B cell (primary cell): ENCODE measurements at regions of chr1 and their contacts with region 1.

Region 1: GRCh38 chr1:226424228-226425003 is 16.5 kb upstream of the PARP1 start:
- DNase-seq: peak; percentile 57
- ATAC-seq: peak; percentile 64
- H3K4me3 ChIP-seq: no peak overlapping the region
- H3K4me3 Mint-ChIP-seq: no peak overlapping the region
- H3K27ac ChIP-seq: no peak overlapping the region
- H3K27ac Mint-ChIP-seq: no peak overlapping the region
- H3K4me1 ChIP-seq: peaks cover 7 to 15% of the 10 kb centered on the region in 2 donors
- H3K4me1 Mint-ChIP-seq: peaks cover 20% of the 10 kb centered on the region
- H3K27me3 ChIP-seq: no peaks in the 10 kb centered on the region
- H3K27me3 Mint-ChIP-seq: no peaks in the 10 kb centered on the region
- CTCF ChIP-seq: peak; percentile 60

Region 2: DNA sequence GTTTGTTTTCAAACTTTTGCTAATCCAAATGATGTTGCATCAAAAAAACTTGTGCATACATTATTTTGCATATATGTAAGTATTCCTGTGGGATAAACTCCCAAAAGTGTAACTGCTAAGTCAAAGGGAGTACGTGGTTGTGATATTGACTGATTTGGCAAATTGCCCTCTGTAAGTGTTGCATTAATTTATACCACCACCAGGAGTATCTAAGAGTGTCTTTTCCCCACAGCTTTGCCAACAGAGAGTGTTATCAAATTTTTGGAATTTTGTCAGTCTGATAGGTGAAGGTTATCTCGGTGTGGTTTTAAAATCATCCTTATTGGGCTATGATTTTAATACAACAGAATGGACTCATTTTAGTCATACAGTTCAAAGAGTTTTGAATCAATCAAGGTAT is 13.6 kb after region 1 on chr1:
- CTCF ChIA-PET with region 1: interaction called, 31 read pairs
- POLR2A ChIA-PET with region 1: no interaction called
- intact Hi-C with region 1: no loop called
- DNase-seq: no peak
- ATAC-seq: no peak
- H3K4me3 ChIP-seq: no peak overlapping the region
- H3K4me3 Mint-ChIP-seq: no peak overlapping the region
- H3K27ac ChIP-seq: no peak overlapping the region
- H3K27ac Mint-ChIP-seq: no peak overlapping the region
- H3K4me1 ChIP-seq: peaks cover 22 to 28% of the 10 kb centered on the region in 2 donors
- H3K4me1 Mint-ChIP-seq: peaks cover 29% of the 10 kb centered on the region
- H3K27me3 ChIP-seq: no peaks in the 10 kb centered on the region
- H3K27me3 Mint-ChIP-seq: no peaks in the 10 kb centered on the region
- CTCF ChIP-seq: peak; percentile 47

Region 3: GRCh38 chr1:226444901-226445300 is 20.5 kb after region 1 on chr1:
- CTCF ChIA-PET with region 1: interaction called, 13 read pairs
- POLR2A ChIA-PET with region 1: no interaction called
- intact Hi-C with region 1: no loop called
- DNase-seq: peak; percentile 74
- ATAC-seq: peak; percentile 97
- H3K4me3 ChIP-seq: no peak overlapping the region
- H3K4me3 Mint-ChIP-seq: peak overlapping the region; percentile 46
- H3K27ac ChIP-seq: peak overlapping the region; percentile 8 to 20
- H3K27ac Mint-ChIP-seq: peak overlapping the region; percentile 78
- H3K4me1 ChIP-seq: peaks cover 23% of the 10 kb centered on the region in 2 donors
- H3K4me1 Mint-ChIP-seq: peaks cover 23% of the 10 kb centered on the region
- H3K27me3 ChIP-seq: no peaks in the 10 kb centered on the region
- H3K27me3 Mint-ChIP-seq: no peaks in the 10 kb centered on the region
- CTCF ChIP-seq: peak; percentile 38

Region 4: DNA sequence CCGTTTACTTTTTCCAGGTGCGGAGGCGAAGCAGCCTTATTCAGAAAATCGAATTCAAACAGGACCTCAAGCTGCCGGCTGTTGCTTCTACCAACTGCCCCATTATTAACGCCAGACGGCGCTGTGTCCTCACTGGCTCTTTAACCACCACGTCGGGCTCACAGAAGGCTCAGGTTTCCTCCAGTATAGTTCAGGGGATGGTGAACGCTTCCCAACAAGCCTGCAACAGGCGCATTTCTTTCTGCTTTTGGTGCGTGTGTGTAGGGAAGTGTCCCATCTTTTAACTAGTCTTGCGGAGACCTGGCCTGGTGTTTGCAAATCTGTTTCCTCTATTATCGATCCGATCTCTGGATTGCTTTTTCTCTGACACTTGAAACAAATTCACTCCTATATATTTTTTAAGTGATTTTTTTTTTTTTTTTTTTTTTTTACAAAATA is 123.4 kb after region 1 on chr1:
- CTCF ChIA-PET with region 1: interaction called, 21 read pairs
- POLR2A ChIA-PET with region 1: no interaction called
- intact Hi-C with region 1: loop called (anchors 1 kb)
- DNase-seq: peak; percentile 83
- ATAC-seq: peak; percentile 80
- H3K4me3 ChIP-seq: peak overlapping the region in 3 of 5 experiments; percentile 34 to 51 (median 35)
- H3K4me3 Mint-ChIP-seq: peak overlapping the region; percentile 59
- H3K27ac ChIP-seq: no peak overlapping the region
- H3K27ac Mint-ChIP-seq: no peak overlapping the region
- H3K4me1 ChIP-seq: peaks cover 22 to 24% of the 10 kb centered on the region in 2 donors
- H3K4me1 Mint-ChIP-seq: peaks cover 21% of the 10 kb centered on the region
- H3K27me3 ChIP-seq: peaks cover 0 to 33% (median 4%) of the 10 kb centered on the region in 4 experiments
- H3K27me3 Mint-ChIP-seq: peaks cover 17% of the 10 kb centered on the region
- CTCF ChIP-seq: peak; percentile 88

Region 5: GRCh38 chr1:226608699-226609505 is 184.5 kb after region 1 on chr1:
- CTCF ChIA-PET with region 1: interaction called, 36 read pairs
- POLR2A ChIA-PET with region 1: no interaction called
- intact Hi-C with region 1: no loop called
- DNase-seq: peak; percentile 76
- ATAC-seq: peak; percentile 78
- H3K4me3 ChIP-seq: no peak overlapping the region
- H3K4me3 Mint-ChIP-seq: no peak overlapping the region
- H3K27ac ChIP-seq: no peak overlapping the region
- H3K27ac Mint-ChIP-seq: no peak overlapping the region
- H3K4me1 ChIP-seq: no peaks in the 10 kb centered on the region
- H3K4me1 Mint-ChIP-seq: peaks cover 2% of the 10 kb centered on the region
- H3K27me3 ChIP-seq: peaks cover 0 to 3% (median 0%) of the 10 kb centered on the region in 4 experiments
- H3K27me3 Mint-ChIP-seq: peaks cover 6% of the 10 kb centered on the region
- CTCF ChIP-seq: peak; percentile 97